IMR-90 (cell line): ENCODE measurements at regions of chr1 and their contacts with region 1.

Region 1: DNA sequence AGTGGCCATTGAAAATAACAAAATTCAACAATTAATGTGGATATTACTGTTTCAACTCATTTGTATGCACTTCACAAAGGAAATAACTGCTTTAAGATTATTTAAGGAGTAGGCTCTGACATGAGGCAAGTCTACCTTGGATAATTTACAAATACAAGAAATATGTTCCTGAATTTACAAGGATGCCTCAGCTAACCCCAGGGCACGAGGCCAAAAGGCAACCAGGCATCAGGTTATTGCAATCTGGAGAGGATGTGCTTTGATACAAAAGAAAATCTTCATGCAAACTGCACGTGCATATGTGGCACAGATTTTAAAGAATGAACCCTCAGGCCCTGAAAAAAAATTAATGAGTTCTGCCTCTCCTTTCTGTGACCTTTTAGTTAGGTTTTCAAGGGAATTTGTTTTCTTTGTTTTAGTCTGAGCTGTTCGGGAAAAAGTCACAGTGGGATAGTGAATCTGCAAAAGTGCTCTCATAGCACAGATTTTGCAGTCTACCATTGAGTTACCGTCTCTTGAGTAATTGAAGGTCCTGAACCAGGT is 1304.2 kb upstream of the ADGRL4 start:
- DNase-seq: no peak
- ATAC-seq: no peak
- H3K4me3 ChIP-seq: no peak overlapping the region
- H3K27ac ChIP-seq: no peak overlapping the region
- H3K4me1 ChIP-seq: no peaks in the 10 kb centered on the region
- H3K27me3 ChIP-seq: no peaks in the 10 kb centered on the region
- CTCF ChIP-seq: no peak
- POLR2A ChIP-seq: no peak
- RAD21 ChIP-seq: no peak

Region 2: GRCh38 chr1:80498673-80499072 is 187.9 kb after region 1 on chr1:
- CTCF ChIA-PET with region 1: no interaction called
- POLR2A ChIA-PET with region 1: no interaction called
- dilution Hi-C with region 1: no loop called
- in situ Hi-C with region 1: no loop called
- intact Hi-C with region 1: loop called (anchors 10 kb)
- DNase-seq: no peak
- ATAC-seq: no peak
- H3K4me3 ChIP-seq: no peak overlapping the region
- H3K27ac ChIP-seq: no peak overlapping the region
- H3K4me1 ChIP-seq: no peaks in the 10 kb centered on the region
- H3K27me3 ChIP-seq: no peaks in the 10 kb centered on the region
- CTCF ChIP-seq: no peak
- POLR2A ChIP-seq: no peak
- RAD21 ChIP-seq: no peak